ENCODE measurements at regions of chr5 and their contacts with region 1.

Region 1: DNA sequence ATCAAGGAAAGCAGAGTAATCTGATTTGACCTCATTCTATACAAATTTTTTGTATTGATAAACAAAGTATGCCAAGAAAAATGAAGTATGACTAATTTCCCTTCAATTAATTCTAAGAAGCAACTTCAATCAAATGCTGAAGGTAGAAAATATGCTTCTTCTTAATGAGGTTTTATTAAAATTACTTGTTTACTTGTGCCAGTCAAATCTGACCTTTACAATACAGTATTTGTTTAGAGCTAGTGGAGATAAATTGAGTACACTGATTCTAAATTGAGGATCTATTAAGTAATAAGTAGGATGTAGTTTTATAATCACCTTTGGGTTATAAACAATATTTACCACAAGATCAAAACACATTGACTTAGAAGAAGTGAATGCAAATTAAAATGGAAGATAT is 129.3 kb upstream of the CDH18 start:
- DNase-seq: no peak
- ATAC-seq: no peak
- H3K4me3 ChIP-seq: no peak overlapping the region
- H3K27ac ChIP-seq: no peak overlapping the region
- H3K4me1 ChIP-seq: no peaks in the 10 kb centered on the region
- H3K27me3 ChIP-seq: no peaks in the 10 kb centered on the region
- CTCF ChIP-seq: no peak
- EP300 ChIP-seq: no peak
- POLR2A ChIP-seq: no peak
- RAD21 ChIP-seq: no peak

Region 2: GRCh38 chr5:20105915-20106314 is 11.3 kb before region 1 on chr5:
- CTCF ChIA-PET with region 1: no interaction called
- POLR2A ChIA-PET with region 1: no interaction called
- in situ Hi-C with region 1: no loop called
- intact Hi-C with region 1: no loop called
- DNase-seq: no peak
- ATAC-seq: no peak
- H3K4me3 ChIP-seq: no peak overlapping the region
- H3K27ac ChIP-seq: no peak overlapping the region
- H3K4me1 ChIP-seq: no peaks in the 10 kb centered on the region
- H3K27me3 ChIP-seq: no peaks in the 10 kb centered on the region; a peak in 1 of 5 replicates
- CTCF ChIP-seq: no peak
- EP300 ChIP-seq: no peak
- POLR2A ChIP-seq: no peak
- RAD21 ChIP-seq: no peak

Region 3: DNA sequence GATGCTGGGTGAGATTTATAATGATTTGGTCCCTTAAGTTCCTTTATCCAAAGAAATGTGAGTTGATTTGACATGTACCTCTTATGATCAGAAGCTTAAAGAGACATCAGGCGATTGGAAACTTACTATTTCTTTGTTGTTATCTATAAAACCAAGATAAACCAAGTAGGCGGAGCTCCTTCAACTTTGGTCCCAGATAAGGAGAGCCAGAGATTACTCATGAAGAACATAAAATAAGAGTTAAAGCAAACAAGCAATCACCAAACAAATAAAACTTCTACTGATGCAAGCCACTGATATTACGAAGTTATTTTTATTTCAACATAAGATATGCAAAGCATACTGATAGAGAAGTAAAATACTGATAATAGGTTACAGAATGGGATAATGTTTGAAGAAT is 12.2 kb after region 1 on chr5:
- CTCF ChIA-PET with region 1: no interaction called
- POLR2A ChIA-PET with region 1: no interaction called
- in situ Hi-C with region 1: no loop called
- intact Hi-C with region 1: loop called (anchors 1 kb)
- DNase-seq: no peak
- ATAC-seq: no peak
- H3K4me3 ChIP-seq: no peak overlapping the region
- H3K27ac ChIP-seq: no peak overlapping the region
- H3K4me1 ChIP-seq: no peaks in the 10 kb centered on the region
- H3K27me3 ChIP-seq: no peaks in the 10 kb centered on the region
- CTCF ChIP-seq: no peak
- EP300 ChIP-seq: no peak
- POLR2A ChIP-seq: no peak
- RAD21 ChIP-seq: no peak

Region 4: DNA sequence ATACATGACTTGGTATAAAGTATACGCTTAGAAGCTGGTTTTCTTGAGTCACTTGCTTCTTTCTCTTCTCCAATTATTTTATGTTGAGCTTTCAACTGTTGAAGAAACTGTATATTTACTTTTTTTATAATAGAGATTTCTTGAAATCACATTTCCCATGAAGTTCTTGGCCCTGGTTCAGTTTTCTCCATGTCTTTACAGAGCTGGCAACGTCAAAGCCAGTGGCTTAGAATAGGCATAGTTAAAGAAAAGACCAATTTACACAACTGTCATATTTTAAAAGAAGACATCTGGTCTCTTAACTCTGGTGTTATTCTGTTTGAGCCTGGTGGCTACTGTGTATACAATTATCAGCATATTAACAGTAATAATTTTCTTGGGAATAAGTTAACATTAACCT is 1486.5 kb after region 1 on chr5:
- CTCF ChIA-PET with region 1: no interaction called
- POLR2A ChIA-PET with region 1: no interaction called
- in situ Hi-C with region 1: no loop called
- intact Hi-C with region 1: no loop called
- DNase-seq: no peak
- ATAC-seq: no peak
- H3K4me3 ChIP-seq: no peak overlapping the region
- H3K27ac ChIP-seq: no peak overlapping the region
- H3K4me1 ChIP-seq: no peaks in the 10 kb centered on the region
- H3K27me3 ChIP-seq: no peaks in the 10 kb centered on the region
- CTCF ChIP-seq: no peak
- EP300 ChIP-seq: no peak
- POLR2A ChIP-seq: no peak
- RAD21 ChIP-seq: no peak